ENCODE measurements at regions of chr3 and their contacts with region 1.

Region 1: DNA sequence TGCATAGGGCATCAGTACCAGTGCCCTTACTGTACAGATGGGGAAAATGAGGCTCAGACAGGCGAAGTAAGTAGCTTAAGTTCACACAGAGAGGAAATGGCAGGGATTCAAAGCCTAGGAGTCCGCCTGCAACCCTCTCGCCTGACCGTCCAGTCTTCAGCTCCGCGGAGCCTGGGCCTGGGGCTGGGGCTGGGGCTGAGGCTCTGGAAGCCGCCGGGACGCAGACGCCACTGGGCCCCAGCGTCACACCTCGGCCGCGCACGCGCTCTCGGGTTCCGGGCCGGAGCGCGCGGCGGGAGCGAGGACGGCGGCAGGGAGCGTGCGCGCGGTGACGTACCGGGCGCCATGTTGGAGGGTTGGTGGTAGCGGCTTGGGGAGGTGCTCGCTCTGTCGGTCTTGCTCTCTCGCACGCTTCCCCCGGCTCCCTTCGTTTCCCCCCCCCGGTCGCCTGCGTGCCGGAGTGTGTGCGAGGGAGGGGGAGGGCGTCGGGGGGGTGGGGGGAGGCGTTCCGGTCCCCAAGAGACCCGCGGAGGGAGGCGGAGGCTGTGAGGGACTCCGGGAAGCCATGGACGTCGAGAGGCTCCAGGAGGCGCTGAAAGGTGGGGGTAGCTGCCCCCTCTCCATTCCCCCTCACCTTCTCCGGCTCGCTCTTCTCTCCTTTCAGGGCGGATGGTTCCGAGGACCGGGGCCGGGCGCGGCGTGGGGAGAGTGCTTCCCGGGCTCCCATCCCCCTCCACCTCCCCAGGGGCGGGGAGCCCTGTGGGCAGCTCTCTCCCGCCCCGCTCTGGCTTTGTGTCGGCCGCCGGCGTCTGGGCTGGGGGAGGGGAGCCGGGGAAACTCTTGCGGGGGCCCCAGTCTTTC is at the start of gene PPP4R2:
- DNase-seq: peak; percentile 94 to 95 (median 95)
- H3K4me3 ChIP-seq: peak within 1 kb of the TSS; percentile 65 to 77
- H3K4me3 Mint-ChIP-seq: peak within 1 kb of the TSS; percentile 84 to 98 (median 94)
- H3K27ac ChIP-seq: peak within 1 kb of the TSS; percentile 92
- H3K27ac Mint-ChIP-seq: peak within 1 kb of the TSS; percentile 91 to 98 (median 93)
- H3K4me1 ChIP-seq: peaks cover 48% of the 10 kb centered on the region
- H3K4me1 Mint-ChIP-seq: peaks cover 29 to 47% (median 38%) of the 10 kb centered on the region in 4 donors
- H3K27me3 ChIP-seq: no peaks in the 10 kb centered on the region
- H3K27me3 Mint-ChIP-seq: no peaks in the 10 kb centered on the region
- total RNA-seq, gene PPP4R2: 71.8 to 77.0 TPM

Region 2: DNA sequence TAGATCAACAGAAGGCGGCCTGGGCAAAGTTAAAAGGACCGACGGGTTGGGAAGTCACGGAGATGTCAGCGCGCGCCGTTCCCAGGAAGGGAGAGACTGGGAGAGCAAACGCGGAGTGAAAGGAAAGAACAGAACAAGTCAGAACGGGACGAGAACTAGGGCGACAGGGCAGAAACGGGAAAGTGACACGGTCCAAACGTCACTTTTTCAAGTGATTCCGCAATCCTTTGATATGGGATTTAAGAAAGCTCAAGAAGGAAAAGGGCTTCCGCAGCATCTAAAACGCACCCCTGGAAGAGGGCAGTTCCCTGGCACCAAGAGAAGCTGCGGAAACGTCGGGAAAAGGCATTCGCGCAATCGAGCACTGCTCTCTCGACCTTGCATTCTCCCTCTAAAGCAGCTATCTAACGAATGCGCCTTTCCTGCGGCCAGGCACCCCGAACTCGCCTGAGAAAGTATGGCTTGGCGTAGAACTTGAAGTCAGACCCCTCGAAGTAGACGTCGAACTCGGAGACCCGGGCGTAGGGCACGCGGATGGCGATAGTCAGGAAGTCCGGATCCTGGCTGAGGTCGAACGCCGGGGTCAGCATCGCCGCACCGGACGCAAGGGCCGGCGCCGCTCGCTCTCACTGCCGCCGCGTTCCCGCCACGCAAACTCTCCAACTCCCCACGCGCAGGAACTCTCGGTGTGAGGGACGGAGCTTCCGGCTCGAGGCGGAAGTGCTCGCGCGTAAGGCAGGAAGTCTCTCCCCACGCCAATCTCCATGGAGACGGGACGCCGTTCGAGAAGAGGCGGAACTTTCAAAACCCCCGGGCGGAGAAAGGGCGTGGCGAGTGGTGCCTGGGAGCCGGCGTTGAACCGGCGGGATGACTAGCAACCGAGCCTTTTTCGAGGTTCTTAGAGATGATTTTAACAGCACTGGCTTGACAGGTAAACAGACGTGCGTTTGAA is 148.7 kb before region 1 on chr3 and contains the start of gene SHQ1:
- CTCF ChIA-PET with region 1: no interaction called
- POLR2A ChIA-PET with region 1: interaction called, 3 read pairs
- intact Hi-C with region 1: loop called (anchors 1 kb)
- DNase-seq: peak; percentile 91 to 96 (median 92)
- H3K4me3 ChIP-seq: peak within 1 kb of the TSS; percentile 82 to 97
- H3K4me3 Mint-ChIP-seq: peak within 1 kb of the TSS; percentile 94 to 97 (median 96)
- H3K27ac ChIP-seq: peak within 1 kb of the TSS; percentile 61
- H3K27ac Mint-ChIP-seq: peak within 1 kb of the TSS; percentile 78 to 95 (median 93)
- H3K4me1 ChIP-seq: peaks cover 47% of the 10 kb centered on the region
- H3K4me1 Mint-ChIP-seq: peaks cover 38 to 60% (median 48%) of the 10 kb centered on the region in 4 donors
- H3K27me3 ChIP-seq: no peaks in the 10 kb centered on the region
- H3K27me3 Mint-ChIP-seq: peaks cover 0 to 2% of the 10 kb centered on the region in 2 donors
- total RNA-seq, gene SHQ1: 28.7 to 31.2 TPM

Region 3: DNA sequence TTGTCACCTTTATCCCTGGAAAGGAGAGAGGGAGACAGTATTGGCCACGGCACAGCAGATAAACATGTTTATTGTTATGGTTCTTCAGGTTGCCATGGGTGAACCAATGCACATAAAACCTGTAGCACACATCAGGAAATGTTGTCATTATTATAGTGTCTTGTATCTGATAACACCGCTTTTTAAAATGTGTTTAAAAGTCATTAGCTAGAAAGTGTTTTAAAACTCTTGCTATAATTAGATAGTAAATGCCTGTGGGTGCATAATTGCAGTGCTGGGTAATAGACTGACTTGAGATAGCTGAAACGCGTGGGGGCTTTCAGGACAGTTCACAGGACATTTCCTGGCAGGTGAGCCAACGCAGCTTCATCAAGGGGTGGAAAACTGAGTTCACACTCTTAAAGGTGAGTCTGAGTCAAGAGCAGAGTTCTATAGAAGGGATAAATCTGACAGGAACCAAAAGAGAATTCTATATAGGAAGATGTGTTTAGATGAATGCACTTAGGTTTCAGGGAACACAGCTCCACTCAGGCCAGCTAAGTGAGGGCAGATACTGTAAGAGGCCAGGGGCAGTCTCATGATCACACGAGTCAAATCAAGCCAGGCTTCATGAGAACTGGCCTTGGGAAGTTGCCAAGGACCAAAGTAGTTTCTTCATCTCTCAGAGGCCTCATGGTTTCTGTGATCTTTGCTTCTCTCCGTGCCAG is 35.7 kb before region 1 on chr3:
- CTCF ChIA-PET with region 1: interaction called, 4 read pairs
- POLR2A ChIA-PET with region 1: interaction called, 12 read pairs
- intact Hi-C with region 1: loop called (anchors 1 kb)
- DNase-seq: peak in 2 of 5 donors; percentile 14 to 39
- H3K4me3 ChIP-seq: no peak overlapping the region
- H3K4me3 Mint-ChIP-seq: peak overlapping the region in 4 of 8 donors; percentile 1 to 12 (median 6)
- H3K27ac ChIP-seq: no peak overlapping the region
- H3K27ac Mint-ChIP-seq: peak overlapping the region in 6 of 7 donors; percentile 31 to 94 (median 74)
- H3K4me1 ChIP-seq: peaks cover 37% of the 10 kb centered on the region
- H3K4me1 Mint-ChIP-seq: peaks cover 33 to 43% (median 38%) of the 10 kb centered on the region in 4 donors
- H3K27me3 ChIP-seq: no peaks in the 10 kb centered on the region
- H3K27me3 Mint-ChIP-seq: no peaks in the 10 kb centered on the region

Region 4: GRCh38 chr3:73041537-73041936 is 44.8 kb after region 1 on chr3:
- CTCF ChIA-PET with region 1: no interaction called
- POLR2A ChIA-PET with region 1: no interaction called
- intact Hi-C with region 1: loop called (anchors 5 kb)
- DNase-seq: no peak
- H3K4me3 ChIP-seq: no peak overlapping the region
- H3K4me3 Mint-ChIP-seq: peak overlapping the region in 4 of 8 donors; percentile 7 to 55 (median 30)
- H3K27ac ChIP-seq: no peak overlapping the region
- H3K27ac Mint-ChIP-seq: peak overlapping the region in 4 of 7 donors; percentile 5 to 72 (median 49)
- H3K4me1 ChIP-seq: peaks cover 78% of the 10 kb centered on the region
- H3K4me1 Mint-ChIP-seq: peaks cover 55 to 91% (median 69%) of the 10 kb centered on the region in 4 donors
- H3K27me3 ChIP-seq: no peaks in the 10 kb centered on the region
- H3K27me3 Mint-ChIP-seq: no peaks in the 10 kb centered on the region